ENCODE measurements at regions of chr11 and their contacts with region 1.

Region 1: DNA sequence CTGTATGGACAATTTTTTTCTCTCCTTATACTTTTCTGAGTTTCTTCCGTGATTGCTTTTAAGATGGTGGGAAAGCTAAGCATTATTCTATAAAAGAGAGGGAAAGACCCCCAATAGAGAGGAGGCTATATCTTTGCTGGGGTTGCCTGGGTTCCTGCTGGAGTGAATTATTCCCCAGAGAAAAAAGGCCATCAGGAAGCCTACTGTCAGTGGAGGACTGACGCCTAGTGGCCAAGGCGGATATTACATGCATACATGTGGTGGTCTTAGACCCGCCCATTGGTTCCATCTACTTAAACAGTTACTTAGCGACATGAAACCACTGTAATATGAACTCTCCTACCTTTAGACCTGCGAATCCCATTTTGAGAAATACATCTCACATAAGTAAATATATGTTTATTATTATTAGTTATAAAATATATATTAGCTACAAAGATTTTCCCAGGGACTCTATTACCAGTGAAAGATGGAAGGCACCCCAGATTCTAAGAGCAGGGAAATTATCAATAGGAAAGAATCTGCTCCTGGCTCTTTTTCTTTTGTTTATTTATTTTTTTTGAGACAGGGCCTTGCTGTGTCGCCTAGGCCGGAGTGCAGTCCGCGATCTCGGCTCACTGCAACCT is 15.7 kb upstream of the PGA3 start:
- DNase-seq: peak; percentile 64 to 89 (median 75)
- ATAC-seq: peak; percentile 89
- H3K4me3 ChIP-seq: no peak overlapping the region
- H3K4me3 Mint-ChIP-seq: no peak overlapping the region
- H3K27ac ChIP-seq: no peak overlapping the region
- H3K27ac Mint-ChIP-seq: no peak overlapping the region
- H3K4me1 ChIP-seq: no peaks in the 10 kb centered on the region
- H3K4me1 Mint-ChIP-seq: no peaks in the 10 kb centered on the region
- H3K27me3 ChIP-seq: no peaks in the 10 kb centered on the region
- H3K27me3 Mint-ChIP-seq: peaks cover 3% of the 10 kb centered on the region
- CTCF ChIP-seq: peak; percentile 99

Region 2: GRCh38 chr11:61129639-61130523 is 57.7 kb before region 1 on chr11:
- CTCF ChIA-PET with region 1: interaction called, 5 read pairs
- POLR2A ChIA-PET with region 1: no interaction called
- intact Hi-C with region 1: loop called (anchors 1 kb)
- DNase-seq: peak; percentile 86 to 94 (median 88)
- ATAC-seq: peak; percentile 84
- H3K4me3 ChIP-seq: no peak overlapping the region
- H3K4me3 Mint-ChIP-seq: peak overlapping the region; percentile 52
- H3K27ac ChIP-seq: peak overlapping the region; percentile 29 to 50
- H3K27ac Mint-ChIP-seq: peak overlapping the region; percentile 50
- H3K4me1 ChIP-seq: peaks cover 25% of the 10 kb centered on the region
- H3K4me1 Mint-ChIP-seq: peaks cover 39% of the 10 kb centered on the region
- H3K27me3 ChIP-seq: no peaks in the 10 kb centered on the region
- H3K27me3 Mint-ChIP-seq: no peaks in the 10 kb centered on the region
- CTCF ChIP-seq: peak; percentile 99

Measured in CD4-positive, alpha-beta T cell (primary cell).